ENCODE measurements at regions of chr7 and their contacts with region 1.

Region 1: GRCh38 chr7:12686894-12687717 is at the start of gene ARL4A:
- DNase-seq: peak; percentile 91
- ATAC-seq: peak; percentile 61
- H3K4me3 ChIP-seq: peak within 1 kb of the TSS; percentile 57 to 98 (median 91)
- H3K4me3 Mint-ChIP-seq: peak within 1 kb of the TSS; percentile 99
- H3K27ac ChIP-seq: peak within 1 kb of the TSS; percentile 99 to 100
- H3K27ac Mint-ChIP-seq: peak within 1 kb of the TSS; percentile 98
- H3K4me1 ChIP-seq: peaks cover 22 to 24% of the 10 kb centered on the region in 2 donors
- H3K4me1 Mint-ChIP-seq: peaks cover 55% of the 10 kb centered on the region
- H3K27me3 ChIP-seq: no peaks in the 10 kb centered on the region
- H3K27me3 Mint-ChIP-seq: no peaks in the 10 kb centered on the region
- CTCF ChIP-seq: peak; percentile 64
- total RNA-seq, gene ARL4A: 14.2 and 15.0 TPM in 2 replicates

Region 2: DNA sequence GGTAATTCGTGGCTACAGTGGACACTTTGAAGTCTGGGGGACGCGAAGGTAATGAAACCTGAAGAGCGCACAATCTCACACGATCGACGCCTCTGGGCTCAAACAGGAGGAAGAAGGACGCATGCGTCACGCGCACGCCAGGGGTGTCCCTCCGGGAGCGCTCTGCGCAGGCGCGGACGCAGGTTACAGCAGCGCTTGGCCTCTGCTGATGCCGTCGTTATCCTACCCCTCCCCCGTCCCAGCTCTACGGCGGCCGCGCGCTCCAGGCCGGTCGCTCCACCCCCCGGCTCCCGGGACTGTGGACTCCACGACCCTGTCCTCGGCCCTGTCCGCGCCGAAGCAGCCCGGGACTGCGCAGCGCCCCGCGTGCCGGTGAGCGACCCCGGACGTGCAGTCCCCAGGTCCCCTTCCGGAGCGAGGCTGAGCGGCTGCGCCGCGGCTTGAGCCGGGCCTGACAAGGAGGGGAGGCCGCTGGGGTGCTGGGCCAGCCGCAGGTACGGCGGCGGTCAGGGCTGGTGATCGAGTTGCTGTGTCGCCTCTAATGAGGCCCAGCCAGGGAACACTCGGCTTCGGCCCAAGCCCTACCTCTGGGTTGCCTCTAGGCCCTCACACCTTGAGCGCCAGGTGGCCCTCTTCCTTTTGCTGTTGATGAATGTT is 475.9 kb before region 1 on chr7 and contains the start of gene TMEM106B:
- CTCF ChIA-PET with region 1: interaction called, 3 read pairs
- POLR2A ChIA-PET with region 1: no interaction called
- intact Hi-C with region 1: loop called (anchors 1 kb)
- DNase-seq: peak; percentile 97
- ATAC-seq: peak; percentile 90
- H3K4me3 ChIP-seq: peak within 1 kb of the TSS; percentile 76 to 100 (median 82)
- H3K4me3 Mint-ChIP-seq: peak within 1 kb of the TSS; percentile 94
- H3K27ac ChIP-seq: peak within 1 kb of the TSS; percentile 87 to 90
- H3K27ac Mint-ChIP-seq: peak within 1 kb of the TSS; percentile 95
- H3K4me1 ChIP-seq: peaks cover 12 to 13% of the 10 kb centered on the region in 2 donors
- H3K4me1 Mint-ChIP-seq: peaks cover 26% of the 10 kb centered on the region
- H3K27me3 ChIP-seq: peaks cover 0 to 4% (median 2%) of the 10 kb centered on the region in 4 experiments
- H3K27me3 Mint-ChIP-seq: peaks cover 19% of the 10 kb centered on the region
- CTCF ChIP-seq: no peak
- total RNA-seq, gene TMEM106B: 28.3 and 30.2 TPM in 2 replicates

Region 3: GRCh38 chr7:12524794-12525386 is 162.2 kb before region 1 on chr7:
- CTCF ChIA-PET with region 1: interaction called, 14 read pairs
- POLR2A ChIA-PET with region 1: no interaction called
- intact Hi-C with region 1: loop called (anchors 10 kb)
- DNase-seq: peak; percentile 58
- ATAC-seq: no peak
- H3K4me3 ChIP-seq: no peak overlapping the region
- H3K4me3 Mint-ChIP-seq: no peak overlapping the region
- H3K27ac ChIP-seq: no peak overlapping the region
- H3K27ac Mint-ChIP-seq: no peak overlapping the region
- H3K4me1 ChIP-seq: no peaks in the 10 kb centered on the region
- H3K4me1 Mint-ChIP-seq: no peaks in the 10 kb centered on the region
- H3K27me3 ChIP-seq: peaks cover 0 to 7% (median 0%) of the 10 kb centered on the region in 4 experiments
- H3K27me3 Mint-ChIP-seq: peaks cover 9% of the 10 kb centered on the region
- CTCF ChIP-seq: peak; percentile 92

Region 4: GRCh38 chr7:12652851-12653518 is 34.1 kb before region 1 on chr7:
- CTCF ChIA-PET with region 1: no interaction called
- POLR2A ChIA-PET with region 1: no interaction called
- intact Hi-C with region 1: no loop called
- DNase-seq: no peak
- ATAC-seq: no peak
- H3K4me3 ChIP-seq: no peak overlapping the region
- H3K4me3 Mint-ChIP-seq: no peak overlapping the region
- H3K27ac ChIP-seq: no peak overlapping the region
- H3K27ac Mint-ChIP-seq: no peak overlapping the region
- H3K4me1 ChIP-seq: no peaks in the 10 kb centered on the region
- H3K4me1 Mint-ChIP-seq: no peaks in the 10 kb centered on the region
- H3K27me3 ChIP-seq: no peaks in the 10 kb centered on the region
- H3K27me3 Mint-ChIP-seq: no peaks in the 10 kb centered on the region
- CTCF ChIP-seq: no peak

Region 5: DNA sequence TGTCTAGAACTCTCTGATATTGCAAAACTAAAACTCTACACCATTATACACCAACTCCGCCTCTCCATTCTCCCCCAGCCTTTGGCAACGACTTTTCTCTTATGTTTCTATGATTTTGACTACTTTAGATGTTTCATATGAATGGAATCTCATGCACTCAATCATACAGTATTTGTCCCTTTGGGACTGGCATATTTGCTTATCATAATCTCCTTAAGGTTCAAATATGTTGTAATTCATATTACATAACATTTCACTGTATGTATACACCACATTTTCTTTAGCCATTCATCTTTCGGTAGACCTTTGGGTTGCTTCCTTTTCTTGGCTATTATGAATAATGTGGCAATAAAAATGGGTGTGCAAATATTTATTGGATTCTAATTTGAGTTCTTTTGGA is 164.7 kb after region 1 on chr7:
- CTCF ChIA-PET with region 1: no interaction called
- POLR2A ChIA-PET with region 1: no interaction called
- intact Hi-C with region 1: no loop called
- DNase-seq: no peak
- ATAC-seq: no peak
- H3K4me3 ChIP-seq: no peak overlapping the region
- H3K4me3 Mint-ChIP-seq: no peak overlapping the region
- H3K27ac ChIP-seq: no peak overlapping the region
- H3K27ac Mint-ChIP-seq: no peak overlapping the region
- H3K4me1 ChIP-seq: no peaks in the 10 kb centered on the region
- H3K4me1 Mint-ChIP-seq: no peaks in the 10 kb centered on the region
- H3K27me3 ChIP-seq: no peaks in the 10 kb centered on the region
- H3K27me3 Mint-ChIP-seq: no peaks in the 10 kb centered on the region
- CTCF ChIP-seq: no peak

Region 6: DNA sequence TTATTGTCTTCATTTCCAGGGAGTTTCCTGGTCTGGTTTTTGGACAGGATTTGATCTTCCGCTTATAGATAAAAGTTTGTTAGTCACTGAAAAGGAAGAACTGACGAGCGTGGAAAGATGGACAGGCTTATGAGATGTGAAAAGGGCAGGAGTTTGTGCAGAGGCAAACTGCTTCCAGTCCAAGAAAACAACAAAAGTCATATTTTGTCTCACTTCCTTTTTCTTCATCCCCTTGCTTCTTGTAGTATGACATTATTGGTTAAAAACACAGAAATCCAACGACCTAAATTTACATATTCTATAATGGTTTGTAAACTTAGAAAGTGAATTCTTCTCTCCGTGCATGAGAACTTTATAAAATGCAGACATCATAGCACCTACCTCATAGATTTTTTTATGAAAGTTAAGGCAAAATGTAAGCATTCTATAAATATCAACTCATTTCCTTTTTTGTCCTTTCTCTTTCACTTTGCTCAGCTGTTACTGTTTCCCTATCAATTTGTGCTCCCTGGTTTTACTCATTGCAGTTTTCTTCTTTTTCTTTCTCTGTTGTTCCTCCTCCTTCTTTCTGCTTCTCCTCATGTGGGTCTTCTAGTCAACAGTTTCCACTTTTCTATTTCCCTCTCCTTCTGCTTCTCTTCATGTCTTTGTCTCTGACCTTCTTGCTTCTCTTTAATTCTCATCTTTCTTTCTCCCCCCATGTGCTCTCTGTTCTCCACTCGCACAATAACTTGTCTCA is 370.5 kb after region 1 on chr7:
- CTCF ChIA-PET with region 1: interaction called, 8 read pairs
- POLR2A ChIA-PET with region 1: no interaction called
- intact Hi-C with region 1: loop called (anchors 1 kb)
- DNase-seq: peak; percentile 67
- ATAC-seq: peak; percentile 78
- H3K4me3 ChIP-seq: peak overlapping the region; percentile 30 to 77 (median 50)
- H3K4me3 Mint-ChIP-seq: peak overlapping the region; percentile 69
- H3K27ac ChIP-seq: peak overlapping the region; percentile 86 to 93
- H3K27ac Mint-ChIP-seq: peak overlapping the region; percentile 96
- H3K4me1 ChIP-seq: peaks cover 36 to 43% of the 10 kb centered on the region in 2 donors
- H3K4me1 Mint-ChIP-seq: peaks cover 38% of the 10 kb centered on the region
- H3K27me3 ChIP-seq: no peaks in the 10 kb centered on the region
- H3K27me3 Mint-ChIP-seq: no peaks in the 10 kb centered on the region
- CTCF ChIP-seq: no peak

Region 7: GRCh38 chr7:13262929-13263530 is 575.9 kb after region 1 on chr7:
- CTCF ChIA-PET with region 1: interaction called, 11 read pairs
- POLR2A ChIA-PET with region 1: no interaction called
- intact Hi-C with region 1: loop called (anchors 1 kb)
- DNase-seq: peak; percentile 59
- ATAC-seq: no peak
- H3K4me3 ChIP-seq: no peak overlapping the region
- H3K4me3 Mint-ChIP-seq: no peak overlapping the region
- H3K27ac ChIP-seq: no peak overlapping the region
- H3K27ac Mint-ChIP-seq: no peak overlapping the region
- H3K4me1 ChIP-seq: no peaks in the 10 kb centered on the region
- H3K4me1 Mint-ChIP-seq: no peaks in the 10 kb centered on the region
- H3K27me3 ChIP-seq: no peaks in the 10 kb centered on the region
- H3K27me3 Mint-ChIP-seq: no peaks in the 10 kb centered on the region
- CTCF ChIP-seq: peak; percentile 79

Measured in B cell (primary cell).